Caco-2 (cell line): ENCODE measurements at regions of chr11 and their contacts with region 1.

Region 1: GRCh38 chr11:22244986-22245592 is 52.2 kb downstream of the ANO5 start:
- DNase-seq: peak; percentile 31 to 41
- H3K4me3 ChIP-seq: no peak overlapping the region
- H3K4me3 Mint-ChIP-seq: no peak overlapping the region
- H3K27ac Mint-ChIP-seq: no peak overlapping the region
- H3K4me1 ChIP-seq: no peaks in the 10 kb centered on the region
- H3K4me1 Mint-ChIP-seq: no peaks in the 10 kb centered on the region
- H3K27me3 ChIP-seq: no peaks in the 10 kb centered on the region
- H3K27me3 Mint-ChIP-seq: peaks cover 12% of the 10 kb centered on the region
- CTCF ChIP-seq: peak; percentile 53 to 77

Region 2: GRCh38 chr11:22192642-22193347 is 52.3 kb before region 1 on chr11 and contains the start of gene ANO5:
- CTCF ChIA-PET with region 1: no interaction called
- POLR2A ChIA-PET with region 1: no interaction called
- intact Hi-C with region 1: no loop called
- DNase-seq: no peak
- H3K4me3 ChIP-seq: no peak within 1 kb of the TSS
- H3K4me3 Mint-ChIP-seq: no peak within 1 kb of the TSS
- H3K27ac Mint-ChIP-seq: no peak within 1 kb of the TSS
- H3K4me1 ChIP-seq: 0 out of 2 replicates have a peak, but pooled peaks cover 6% of the 10 kb centered on the region
- H3K4me1 Mint-ChIP-seq: no peaks in the 10 kb centered on the region
- H3K27me3 ChIP-seq: no peaks in the 10 kb centered on the region
- H3K27me3 Mint-ChIP-seq: peaks cover 4% of the 10 kb centered on the region
- CTCF ChIP-seq: no peak
- total RNA-seq, gene ANO5: not detected in 2 replicates

Region 3: DNA sequence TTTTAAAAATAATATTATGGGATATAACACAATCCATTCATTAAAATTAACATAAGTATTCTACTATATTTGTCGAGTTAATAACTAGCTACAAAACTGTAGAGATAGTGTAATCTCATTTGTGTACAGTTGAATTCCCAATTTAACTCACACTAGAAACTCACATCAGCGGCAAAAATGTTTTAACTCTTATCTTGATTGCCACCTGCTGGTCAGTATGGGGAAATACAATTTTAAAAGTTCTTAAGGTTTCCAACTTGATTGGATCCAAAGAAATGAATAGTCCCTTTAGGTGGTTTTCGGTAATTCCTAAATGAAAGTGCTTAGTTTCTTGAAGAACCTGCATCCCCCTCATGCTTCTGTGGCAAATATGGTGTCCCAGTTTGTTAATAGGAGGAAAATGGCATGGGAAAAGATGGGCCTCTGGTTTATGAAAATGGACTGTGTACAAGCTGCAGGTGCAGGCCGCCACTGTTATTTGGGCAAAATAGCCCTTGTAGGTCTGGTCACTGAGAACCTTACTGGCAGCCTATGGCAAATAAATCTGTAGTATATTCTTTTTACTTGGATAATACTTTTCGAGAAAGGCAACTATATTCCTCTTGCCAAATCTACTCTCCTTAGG is 59.4 kb after region 1 on chr11:
- CTCF ChIA-PET with region 1: interaction called, 3 read pairs
- POLR2A ChIA-PET with region 1: no interaction called
- intact Hi-C with region 1: loop called (anchors 1 kb)
- DNase-seq: no peak
- H3K4me3 ChIP-seq: no peak overlapping the region
- H3K4me3 Mint-ChIP-seq: no peak overlapping the region
- H3K27ac Mint-ChIP-seq: no peak overlapping the region
- H3K4me1 ChIP-seq: no peaks in the 10 kb centered on the region
- H3K4me1 Mint-ChIP-seq: no peaks in the 10 kb centered on the region
- H3K27me3 ChIP-seq: no peaks in the 10 kb centered on the region
- H3K27me3 Mint-ChIP-seq: peaks cover 3% of the 10 kb centered on the region
- CTCF ChIP-seq: peak; percentile 53 to 75